Activated naive CD4-positive, alpha-beta T cell treated with anti-CD3 and anti-CD28 coated beads for 36 hours (primary cell): ENCODE measurements at regions of chr19 and their contacts with region 1.

Region 1: GRCh38 chr19:14517840-14518505 is at the start of gene DNAJB1:
- DNase-seq: peak; percentile 70
- H3K4me3 Mint-ChIP-seq: peak within 1 kb of the TSS; percentile 89
- H3K27ac Mint-ChIP-seq: peak within 1 kb of the TSS; percentile 92
- H3K4me1 Mint-ChIP-seq: peaks cover 63% of the 10 kb centered on the region
- H3K27me3 Mint-ChIP-seq: no peaks in the 10 kb centered on the region
- total RNA-seq, gene DNAJB1: 48.1 to 49.5 TPM

Region 2: DNA sequence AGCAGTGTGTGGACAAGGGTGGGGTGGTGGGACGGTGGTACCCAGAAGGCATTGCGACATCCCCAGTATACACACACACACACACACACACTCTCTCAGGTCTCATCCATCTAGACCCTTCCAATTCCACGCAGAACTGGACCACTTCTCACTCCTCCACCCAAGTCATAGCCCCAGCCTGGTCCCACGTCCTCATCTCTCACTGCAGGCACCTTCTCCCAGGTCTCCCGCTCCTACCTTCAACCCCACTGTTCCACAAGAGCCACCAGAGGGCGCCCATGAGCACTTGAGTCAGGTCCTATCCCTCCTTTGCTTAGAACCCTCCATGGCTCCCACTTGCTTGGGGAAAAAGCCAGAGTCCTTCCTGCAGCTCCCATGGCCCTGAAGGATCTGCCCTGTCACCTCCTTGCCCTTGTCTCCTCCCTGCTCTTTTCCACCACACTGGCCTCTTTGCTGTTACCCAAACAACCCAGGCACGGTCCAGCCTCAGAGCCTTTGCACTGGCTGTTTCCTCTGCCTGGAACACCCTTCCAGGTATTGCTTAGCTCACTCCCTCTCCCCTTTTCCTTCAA is 1305.1 kb before region 1 on chr19:
- CTCF ChIA-PET with region 1: no interaction called
- intact Hi-C with region 1: loop called (anchors 2 kb)
- DNase-seq: peak; percentile 89
- H3K4me3 Mint-ChIP-seq: no peak overlapping the region
- H3K27ac Mint-ChIP-seq: no peak overlapping the region
- H3K4me1 Mint-ChIP-seq: peaks cover 33% of the 10 kb centered on the region
- H3K27me3 Mint-ChIP-seq: no peaks in the 10 kb centered on the region

Region 3: GRCh38 chr19:14383661-14384555 is 134.1 kb before region 1 on chr19:
- CTCF ChIA-PET with region 1: interaction called, 6 read pairs
- intact Hi-C with region 1: loop called (anchors 5 kb)
- DNase-seq: peak; percentile 79
- H3K4me3 Mint-ChIP-seq: peak overlapping the region; percentile 97
- H3K27ac Mint-ChIP-seq: peak overlapping the region; percentile 100
- H3K4me1 Mint-ChIP-seq: peaks cover 36% of the 10 kb centered on the region
- H3K27me3 Mint-ChIP-seq: no peaks in the 10 kb centered on the region

Region 4: GRCh38 chr19:14419106-14419813 is 98.7 kb before region 1 on chr19 and contains the start of gene DDX39A:
- CTCF ChIA-PET with region 1: no interaction called
- intact Hi-C with region 1: loop called (anchors 1 kb)
- DNase-seq: peak; percentile 99
- H3K4me3 Mint-ChIP-seq: peak within 1 kb of the TSS; percentile 100
- H3K27ac Mint-ChIP-seq: peak within 1 kb of the TSS; percentile 100
- H3K4me1 Mint-ChIP-seq: peaks cover 32% of the 10 kb centered on the region
- H3K27me3 Mint-ChIP-seq: no peaks in the 10 kb centered on the region
- total RNA-seq, gene DDX39A: 219 to 227 TPM

Region 5: GRCh38 chr19:14505488-14506432 is 12.2 kb before region 1 on chr19:
- CTCF ChIA-PET with region 1: interaction called, 6 read pairs
- intact Hi-C with region 1: loop called (anchors 1 kb)
- DNase-seq: peak; percentile 87
- H3K4me3 Mint-ChIP-seq: no peak overlapping the region
- H3K27ac Mint-ChIP-seq: peak overlapping the region; percentile 69
- H3K4me1 Mint-ChIP-seq: peaks cover 64% of the 10 kb centered on the region
- H3K27me3 Mint-ChIP-seq: no peaks in the 10 kb centered on the region

Region 6: GRCh38 chr19:14529254-14530004 is 11.5 kb after region 1 on chr19 and contains the start of gene TECR:
- CTCF ChIA-PET with region 1: no interaction called
- intact Hi-C with region 1: loop called (anchors 1 kb)
- DNase-seq: peak; percentile 100
- H3K4me3 Mint-ChIP-seq: peak within 1 kb of the TSS; percentile 99
- H3K27ac Mint-ChIP-seq: peak within 1 kb of the TSS; percentile 94
- H3K4me1 Mint-ChIP-seq: peaks cover 43% of the 10 kb centered on the region
- H3K27me3 Mint-ChIP-seq: no peaks in the 10 kb centered on the region
- total RNA-seq, gene TECR: 102 to 105 TPM

Region 7: GRCh38 chr19:14689598-14690503 is 171.9 kb after region 1 on chr19 and contains the start of gene ZNF333:
- CTCF ChIA-PET with region 1: no interaction called
- intact Hi-C with region 1: loop called (anchors 5 kb)
- DNase-seq: peak; percentile 100
- H3K4me3 Mint-ChIP-seq: peak within 1 kb of the TSS; percentile 96
- H3K27ac Mint-ChIP-seq: peak within 1 kb of the TSS; percentile 99
- H3K4me1 Mint-ChIP-seq: peaks cover 18% of the 10 kb centered on the region
- H3K27me3 Mint-ChIP-seq: no peaks in the 10 kb centered on the region
- total RNA-seq, gene ZNF333: 28.6 to 31.7 TPM

Region 8: GRCh38 chr19:14731200-14731599 is 213.2 kb after region 1 on chr19:
- CTCF ChIA-PET with region 1: no interaction called
- intact Hi-C with region 1: no loop called
- DNase-seq: no peak
- H3K4me3 Mint-ChIP-seq: no peak overlapping the region
- H3K27ac Mint-ChIP-seq: no peak overlapping the region
- H3K4me1 Mint-ChIP-seq: no peaks in the 10 kb centered on the region
- H3K27me3 Mint-ChIP-seq: no peaks in the 10 kb centered on the region